ENCODE measurements at regions of chr12 and their contacts with region 1.

Region 1: DNA sequence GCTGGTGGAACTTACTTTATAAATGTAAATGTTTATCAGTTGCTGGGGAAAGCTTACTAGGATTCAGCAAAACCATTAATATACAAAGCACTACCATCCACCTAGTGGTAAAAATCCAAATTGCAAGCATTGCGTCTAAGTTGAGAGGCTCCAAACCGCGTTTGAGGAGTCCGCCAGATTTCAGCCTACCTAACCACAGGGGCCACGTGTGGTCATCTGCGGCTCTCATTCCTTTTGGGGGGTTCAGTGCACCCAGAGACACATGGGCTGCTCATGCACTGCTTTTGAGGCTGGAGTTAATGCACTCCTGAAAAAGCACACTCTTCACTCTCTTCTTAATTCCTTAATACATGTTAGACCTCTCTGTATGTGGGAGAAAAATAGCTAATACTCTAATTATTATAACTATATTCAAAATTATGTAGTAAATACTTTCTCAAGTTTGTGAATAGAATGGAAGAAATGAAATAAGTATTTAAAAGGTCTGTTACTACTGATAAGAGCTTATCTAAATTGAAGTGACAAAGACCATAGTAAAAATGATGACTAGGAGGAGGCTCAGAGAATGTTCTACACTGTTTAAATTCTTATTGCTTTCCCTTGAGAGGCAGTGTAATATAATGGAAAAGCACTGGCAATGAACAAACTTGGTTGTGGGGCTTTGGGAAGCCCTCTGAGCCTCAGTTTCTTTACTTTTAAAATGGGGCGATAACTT is 41.4 kb upstream of the MANSC4 start:
- DNase-seq: peak; percentile 49
- H3K4me3 Mint-ChIP-seq: no peak overlapping the region
- H3K27ac Mint-ChIP-seq: peak overlapping the region; percentile 88
- H3K4me1 Mint-ChIP-seq: peaks cover 43% of the 10 kb centered on the region
- H3K27me3 Mint-ChIP-seq: peaks cover 30% of the 10 kb centered on the region

Region 2: DNA sequence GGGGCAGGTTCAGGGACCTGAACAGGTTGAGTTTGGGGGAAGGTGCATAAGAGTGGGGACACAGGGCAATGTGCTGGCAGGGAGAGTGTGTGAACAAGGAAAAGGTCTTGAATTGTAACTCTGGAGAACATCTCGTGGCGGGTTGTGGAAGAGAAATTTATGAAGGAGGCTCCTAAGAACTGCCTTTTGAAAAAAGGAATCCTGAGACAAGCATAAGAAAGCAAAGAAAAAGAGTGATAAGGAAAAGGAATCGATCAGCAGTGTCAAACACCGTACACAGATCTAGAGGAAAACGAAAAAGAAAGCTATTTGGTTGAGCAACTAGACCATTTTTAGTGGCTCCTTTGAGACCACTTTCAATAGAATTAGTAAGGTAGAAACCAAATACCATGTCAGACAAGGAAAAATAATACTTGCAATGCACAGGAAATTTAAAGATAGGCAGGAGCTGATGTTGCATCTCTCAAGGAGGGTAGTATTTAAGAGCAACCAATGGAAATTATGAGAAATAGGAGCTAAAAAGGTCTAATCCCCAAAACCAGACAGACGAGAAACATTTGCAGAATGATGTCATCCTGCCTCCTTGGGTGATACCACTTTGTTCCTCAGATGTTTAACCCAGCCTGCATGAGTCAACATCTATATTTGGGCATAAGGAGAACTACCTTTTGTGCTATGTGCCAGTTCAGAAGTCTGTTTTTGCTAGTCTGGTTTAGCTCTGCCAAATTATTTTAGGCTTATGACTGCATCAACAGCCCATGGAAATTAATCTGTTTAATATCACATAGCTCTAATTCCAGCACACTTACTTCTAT is 641.8 kb before region 1 on chr12:
- CTCF ChIA-PET with region 1: no interaction called
- intact Hi-C with region 1: loop called (anchors 1 kb)
- DNase-seq: peak; percentile 69
- H3K4me3 Mint-ChIP-seq: no peak overlapping the region
- H3K27ac Mint-ChIP-seq: peak overlapping the region; percentile 76
- H3K4me1 Mint-ChIP-seq: peaks cover 38% of the 10 kb centered on the region
- H3K27me3 Mint-ChIP-seq: peaks cover 2% of the 10 kb centered on the region

Region 3: GRCh38 chr12:27710592-27711316 is 110.7 kb before region 1 on chr12 and contains the start of gene MRPS35:
- CTCF ChIA-PET with region 1: interaction called, 6 read pairs
- intact Hi-C with region 1: loop called (anchors 1 kb)
- DNase-seq: peak; percentile 95
- H3K4me3 Mint-ChIP-seq: peak within 1 kb of the TSS; percentile 98
- H3K27ac Mint-ChIP-seq: peak within 1 kb of the TSS; percentile 92
- H3K4me1 Mint-ChIP-seq: peaks cover 18% of the 10 kb centered on the region
- H3K27me3 Mint-ChIP-seq: no peaks in the 10 kb centered on the region
- total RNA-seq, gene MRPS35: 53.1 to 57.6 TPM

Region 4: DNA sequence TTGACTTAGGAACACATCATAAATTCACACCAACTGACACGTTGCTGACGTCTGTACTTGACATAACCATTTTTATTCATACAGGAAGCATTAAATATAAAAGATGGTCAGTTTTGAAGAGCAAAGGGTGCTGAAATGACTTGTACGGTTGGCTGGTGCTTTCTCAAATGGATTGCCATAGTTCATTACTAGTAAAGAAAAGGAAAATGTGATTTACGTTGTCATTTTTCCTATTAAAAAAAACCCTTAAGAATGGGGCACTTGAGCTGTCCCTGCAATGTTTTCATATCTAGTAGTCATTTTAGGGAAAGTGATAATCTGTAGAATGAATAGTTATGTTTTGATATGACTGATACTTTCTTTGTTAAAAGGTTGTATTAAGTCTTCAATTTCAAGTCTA is 18.9 kb before region 1 on chr12:
- CTCF ChIA-PET with region 1: interaction called, 26 read pairs
- intact Hi-C with region 1: loop called (anchors 1 kb)
- DNase-seq: peak; percentile 49
- H3K4me3 Mint-ChIP-seq: no peak overlapping the region
- H3K27ac Mint-ChIP-seq: peak overlapping the region; percentile 85
- H3K4me1 Mint-ChIP-seq: peaks cover 59% of the 10 kb centered on the region
- H3K27me3 Mint-ChIP-seq: peaks cover 4% of the 10 kb centered on the region

Region 5: DNA sequence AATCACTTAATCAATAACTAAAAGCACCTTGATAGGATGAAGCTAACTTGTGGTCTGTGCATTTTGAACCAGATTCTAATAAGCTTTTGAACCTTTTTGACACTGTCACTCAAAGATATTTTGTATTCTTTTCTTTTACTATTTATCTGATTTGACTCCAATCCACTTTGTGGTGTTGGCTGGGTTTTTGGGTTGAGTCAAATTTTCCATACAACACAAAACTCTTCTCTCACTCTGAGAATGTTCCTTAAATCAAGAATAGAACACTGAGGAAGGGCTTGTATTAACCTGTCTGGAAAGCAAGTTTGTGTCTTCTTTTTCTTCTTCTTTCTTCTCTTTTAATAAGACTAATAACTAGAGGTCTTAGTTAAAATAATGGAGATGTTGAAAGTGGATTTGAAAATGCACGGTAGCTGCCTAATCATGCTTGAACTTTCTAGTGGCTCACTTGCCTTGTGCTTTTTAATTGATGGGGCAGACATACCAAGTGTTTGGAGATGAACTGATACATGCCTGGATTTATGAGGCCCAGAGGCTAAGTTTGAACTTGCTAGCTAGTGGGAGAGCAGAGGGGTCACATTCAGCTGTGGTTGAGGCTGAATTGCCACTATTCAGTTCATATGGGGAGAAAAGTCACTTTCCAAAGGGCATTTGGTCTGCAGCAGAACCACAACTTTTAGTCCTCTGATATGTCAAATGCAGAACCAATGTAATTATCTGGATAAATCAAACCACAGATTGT is 244.6 kb after region 1 on chr12:
- CTCF ChIA-PET with region 1: no interaction called
- intact Hi-C with region 1: loop called (anchors 1 kb)
- DNase-seq: peak; percentile 17
- H3K4me3 Mint-ChIP-seq: no peak overlapping the region
- H3K27ac Mint-ChIP-seq: no peak overlapping the region
- H3K4me1 Mint-ChIP-seq: peaks cover 18% of the 10 kb centered on the region
- H3K27me3 Mint-ChIP-seq: peaks cover 6% of the 10 kb centered on the region

Region 6: GRCh38 chr12:28253161-28253641 is 431.8 kb after region 1 on chr12:
- CTCF ChIA-PET with region 1: no interaction called
- intact Hi-C with region 1: loop called (anchors 1 kb)
- DNase-seq: peak; percentile 60
- H3K4me3 Mint-ChIP-seq: peak overlapping the region; percentile 30
- H3K27ac Mint-ChIP-seq: peak overlapping the region; percentile 79
- H3K4me1 Mint-ChIP-seq: peaks cover 63% of the 10 kb centered on the region
- H3K27me3 Mint-ChIP-seq: no peaks in the 10 kb centered on the region

Measured in activated naive CD4-positive, alpha-beta T cell treated with anti-CD3 and anti-CD28 coated beads for 36 hours (primary cell).